Calu3 (cell line): ENCODE measurements at regions of chr7 and their contacts with region 1.

Region 1: DNA sequence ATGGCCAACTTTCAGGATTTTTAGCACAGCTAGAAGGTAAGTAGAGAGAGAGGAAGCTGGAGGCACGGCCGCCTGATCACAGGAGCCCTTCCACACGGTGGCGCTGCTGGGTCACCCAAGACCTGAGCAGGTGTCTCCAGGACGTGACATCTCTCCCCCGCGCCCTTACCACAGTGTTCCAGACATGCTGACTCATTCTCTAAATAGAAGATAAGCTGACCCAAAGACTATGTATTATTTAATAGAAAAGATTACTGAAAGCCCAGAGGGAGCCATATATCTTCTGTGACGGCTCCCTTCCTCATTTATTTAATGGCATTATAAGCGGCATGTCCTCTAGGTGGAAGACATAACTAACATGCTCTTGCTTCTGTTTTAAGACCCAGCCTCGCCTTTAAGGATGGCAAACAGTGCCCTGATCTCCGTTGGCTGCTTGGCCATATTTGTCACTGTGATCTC is 26.0 kb upstream of the MALSU1 start:
- DNase-seq: peak; percentile 99
- H3K4me3 Mint-ChIP-seq: peak overlapping the region; percentile 42
- H3K27ac Mint-ChIP-seq: peak overlapping the region; percentile 77
- H3K4me1 Mint-ChIP-seq: peaks cover 32% of the 10 kb centered on the region
- H3K27me3 Mint-ChIP-seq: no peaks in the 10 kb centered on the region
- CTCF ChIP-seq: peak; percentile 98

Region 2: DNA sequence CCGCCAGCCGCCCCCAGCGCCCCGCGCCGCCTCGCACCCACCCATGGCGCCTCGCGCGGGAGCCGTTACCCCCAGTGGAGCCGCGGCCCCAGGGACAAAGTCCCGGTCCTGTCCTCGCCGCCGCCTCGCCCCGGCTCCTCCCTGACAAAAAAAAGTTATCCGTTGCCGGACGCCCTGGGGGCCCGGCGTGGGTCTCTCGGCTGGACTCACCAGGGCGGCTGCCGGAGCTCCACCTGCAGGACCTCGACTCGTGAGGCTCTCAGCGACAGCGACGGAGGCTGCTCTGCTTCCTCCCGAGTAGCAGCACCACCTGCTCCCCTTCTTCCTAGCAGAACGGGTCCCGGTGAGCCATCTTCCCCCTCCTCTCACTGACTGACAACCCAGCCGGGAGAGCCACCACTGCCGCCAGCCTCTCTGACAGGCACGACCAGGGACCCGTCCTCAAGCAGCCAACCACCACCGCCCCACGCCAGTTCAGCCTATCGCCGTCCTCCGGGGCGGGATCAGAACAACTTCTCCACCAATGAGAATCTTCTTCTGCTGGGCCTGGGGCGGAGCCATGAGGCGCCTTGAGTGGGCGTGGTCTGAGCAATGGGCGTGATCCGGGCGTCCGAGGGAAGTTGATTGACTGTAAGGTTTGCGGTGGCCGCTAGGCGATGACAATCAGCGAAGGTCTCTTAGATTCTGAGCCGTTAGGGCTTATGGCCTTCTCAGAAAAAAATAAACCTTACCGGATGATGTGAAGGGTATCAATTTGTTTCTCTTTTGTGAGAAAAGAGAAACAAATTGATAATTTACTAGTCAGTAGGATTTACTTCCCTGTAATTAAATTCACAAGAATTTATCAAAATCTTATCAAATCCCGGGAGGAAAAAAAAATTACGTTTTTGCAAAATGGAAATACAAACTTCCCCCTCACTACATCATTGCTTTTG is 259.2 kb before region 1 on chr7 and contains the start of gene HYCC1:
- CTCF ChIA-PET with region 1: interaction called, 16 read pairs
- intact Hi-C with region 1: no loop called
- DNase-seq: peak; percentile 100
- H3K4me3 Mint-ChIP-seq: no peak within 1 kb of the TSS
- H3K27ac Mint-ChIP-seq: peak within 1 kb of the TSS; percentile 77
- H3K4me1 Mint-ChIP-seq: peaks cover 18% of the 10 kb centered on the region
- H3K27me3 Mint-ChIP-seq: no peaks in the 10 kb centered on the region
- CTCF ChIP-seq: peak; percentile 63
- total RNA-seq, gene HYCC1: 12.7 and 14.2 TPM in 2 replicates

Region 3: DNA sequence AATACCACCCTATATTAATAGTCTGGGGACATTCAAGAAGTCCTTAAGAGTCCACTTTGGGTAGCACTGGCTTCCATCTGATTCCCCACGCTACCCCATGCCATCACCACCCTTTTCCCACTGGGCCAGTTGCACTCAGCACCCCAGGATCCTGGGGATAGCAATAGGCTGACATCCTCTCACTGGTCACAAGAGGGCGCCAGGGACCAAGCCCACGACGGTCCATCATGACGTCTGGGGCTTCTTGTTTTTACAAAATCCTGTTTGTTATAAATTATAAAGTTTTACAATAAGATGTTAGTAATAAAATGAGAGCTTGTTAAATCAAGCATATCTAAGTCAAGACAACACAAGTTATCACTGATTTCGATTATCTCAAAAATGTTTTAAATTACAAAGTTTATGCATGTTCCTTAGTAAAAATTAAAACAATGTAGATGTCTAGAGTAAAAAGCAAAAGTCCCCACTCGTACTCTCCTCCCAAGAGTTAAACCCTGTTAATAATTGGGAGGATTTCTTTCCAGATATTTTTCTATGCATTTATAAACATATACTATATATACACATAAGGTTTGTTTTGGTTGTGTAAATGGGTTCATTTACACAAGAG is 11.2 kb before region 1 on chr7:
- CTCF ChIA-PET with region 1: interaction called, 12 read pairs
- intact Hi-C with region 1: no loop called
- DNase-seq: peak; percentile 83
- H3K4me3 Mint-ChIP-seq: no peak overlapping the region
- H3K27ac Mint-ChIP-seq: no peak overlapping the region
- H3K4me1 Mint-ChIP-seq: no peaks in the 10 kb centered on the region
- H3K27me3 Mint-ChIP-seq: peaks cover 31% of the 10 kb centered on the region
- CTCF ChIP-seq: peak; percentile 95

Region 4: GRCh38 chr7:23334482-23335056 is 61.4 kb after region 1 on chr7:
- CTCF ChIA-PET with region 1: interaction called, 10 read pairs
- intact Hi-C with region 1: loop called (anchors 1 kb)
- DNase-seq: peak; percentile 73
- H3K4me3 Mint-ChIP-seq: peak overlapping the region; percentile 20
- H3K27ac Mint-ChIP-seq: peak overlapping the region; percentile 77
- H3K4me1 Mint-ChIP-seq: peaks cover 53% of the 10 kb centered on the region
- H3K27me3 Mint-ChIP-seq: no peaks in the 10 kb centered on the region
- CTCF ChIP-seq: no peak

Region 5: DNA sequence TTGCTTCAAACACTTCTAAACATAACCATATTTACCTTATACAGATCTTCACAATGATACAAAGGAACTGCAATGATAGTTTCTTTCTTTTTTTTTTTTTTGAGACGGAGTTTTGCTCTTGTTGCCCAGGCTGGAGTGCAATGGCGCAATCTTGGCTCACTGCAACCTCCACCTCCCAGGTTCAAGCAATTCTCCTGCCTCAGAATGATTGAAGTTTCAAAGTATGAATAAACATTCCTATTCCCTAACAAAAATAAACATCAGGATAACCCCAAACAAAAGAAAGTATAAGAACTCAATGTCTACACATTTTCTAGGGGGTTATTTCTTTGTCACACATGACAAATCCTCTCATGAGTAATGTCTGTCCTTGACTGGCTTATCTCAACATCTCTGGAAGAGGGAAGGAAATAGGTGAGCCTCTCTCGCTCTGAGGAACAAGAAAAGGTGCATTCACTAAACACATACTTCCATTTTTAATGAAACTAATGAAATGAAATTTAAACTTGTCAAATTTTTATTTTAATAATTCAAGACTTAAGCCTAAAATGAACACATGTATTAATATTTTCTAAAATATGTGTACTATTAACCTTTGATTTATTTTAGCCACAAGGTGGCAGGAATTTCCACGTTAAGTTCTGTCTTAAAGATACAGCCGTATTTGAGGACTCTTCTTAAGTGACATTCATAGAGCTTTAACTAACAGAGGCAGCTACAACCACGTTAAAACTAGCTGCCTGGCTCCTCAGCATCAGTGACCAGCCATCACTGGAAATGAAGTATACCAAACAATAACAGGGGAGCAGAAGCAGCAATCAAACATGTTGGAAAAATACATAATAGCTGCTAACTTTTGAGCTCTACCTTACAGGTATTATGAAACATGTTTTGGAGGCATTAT is 84.3 kb after region 1 on chr7:
- CTCF ChIA-PET with region 1: interaction called, 20 read pairs
- intact Hi-C with region 1: loop called (anchors 1 kb)
- DNase-seq: no peak
- H3K4me3 Mint-ChIP-seq: peak overlapping the region; percentile 30
- H3K27ac Mint-ChIP-seq: peak overlapping the region; percentile 47
- H3K4me1 Mint-ChIP-seq: peaks cover 39% of the 10 kb centered on the region
- H3K27me3 Mint-ChIP-seq: no peaks in the 10 kb centered on the region
- CTCF ChIP-seq: peak; percentile 50

Region 6: GRCh38 chr7:23529262-23529859 is 256.2 kb after region 1 on chr7:
- CTCF ChIA-PET with region 1: interaction called, 8 read pairs
- intact Hi-C with region 1: loop called (anchors 5 kb)
- DNase-seq: no peak
- H3K4me3 Mint-ChIP-seq: peak overlapping the region; percentile 79
- H3K27ac Mint-ChIP-seq: peak overlapping the region; percentile 93
- H3K4me1 Mint-ChIP-seq: peaks cover 58% of the 10 kb centered on the region
- H3K27me3 Mint-ChIP-seq: no peaks in the 10 kb centered on the region
- CTCF ChIP-seq: no peak

Region 7: GRCh38 chr7:23546897-23547572 is 273.9 kb after region 1 on chr7:
- CTCF ChIA-PET with region 1: interaction called, 46 read pairs
- intact Hi-C with region 1: loop called (anchors 1 kb)
- DNase-seq: peak; percentile 87
- H3K4me3 Mint-ChIP-seq: no peak overlapping the region
- H3K27ac Mint-ChIP-seq: no peak overlapping the region
- H3K4me1 Mint-ChIP-seq: peaks cover 16% of the 10 kb centered on the region
- H3K27me3 Mint-ChIP-seq: no peaks in the 10 kb centered on the region
- CTCF ChIP-seq: peak; percentile 98